CD4-positive, alpha-beta T cell (primary cell): ENCODE measurements at regions of chr12 and their contacts with region 1.

Region 1: GRCh38 chr12:111599459-111600204 is 517 bp upstream of the ATXN2 start:
- DNase-seq: peak; percentile 70 to 92 (median 80)
- ATAC-seq: peak; percentile 69
- H3K4me3 ChIP-seq: peak overlapping the region; percentile 92
- H3K4me3 Mint-ChIP-seq: peak overlapping the region; percentile 94
- H3K27ac ChIP-seq: peak overlapping the region; percentile 83 to 88
- H3K27ac Mint-ChIP-seq: peak overlapping the region; percentile 88
- H3K4me1 ChIP-seq: peaks cover 19% of the 10 kb centered on the region
- H3K4me1 Mint-ChIP-seq: peaks cover 31% of the 10 kb centered on the region
- H3K27me3 ChIP-seq: no peaks in the 10 kb centered on the region
- H3K27me3 Mint-ChIP-seq: no peaks in the 10 kb centered on the region
- CTCF ChIP-seq: no peak

Region 2: DNA sequence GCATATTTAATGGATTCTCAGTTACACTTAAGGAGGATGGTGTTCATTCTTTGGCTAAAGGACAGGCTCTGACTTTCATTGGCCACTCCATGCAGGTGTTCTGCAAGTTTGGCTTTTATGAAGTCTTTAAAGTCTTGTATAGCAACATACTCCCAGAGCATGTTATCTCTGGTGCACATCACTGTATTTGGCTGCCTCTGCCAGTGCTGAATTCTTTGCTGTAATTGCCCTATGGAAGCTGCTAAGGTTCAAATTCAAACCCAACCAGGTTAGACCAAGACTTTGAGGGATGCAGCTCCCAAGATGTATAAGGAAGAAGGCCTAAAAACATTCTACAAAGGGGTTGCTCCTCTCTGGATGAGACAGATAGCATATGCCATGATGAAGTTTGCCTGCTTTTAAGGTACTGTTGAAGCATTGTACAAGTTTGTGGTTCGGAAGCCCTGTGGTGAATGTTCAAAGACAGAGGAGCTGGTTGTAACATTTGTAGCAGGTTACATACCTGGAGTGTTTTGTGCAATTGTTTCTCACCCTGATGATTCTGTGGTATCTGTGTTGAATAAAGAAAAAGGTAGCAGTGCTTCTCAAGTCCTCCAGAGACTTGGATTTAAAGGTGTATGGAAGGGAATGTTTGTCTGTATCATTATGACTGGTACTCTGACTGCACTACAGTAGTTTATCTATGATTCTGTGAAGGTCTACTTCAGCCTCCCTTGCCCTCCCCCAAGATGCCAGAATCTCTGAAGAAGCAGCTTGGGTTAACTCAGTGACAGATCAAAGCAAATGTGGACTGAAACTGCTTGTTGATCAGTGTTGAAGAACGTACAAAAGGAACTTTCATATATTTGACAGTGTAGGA is 393.9 kb after region 1 on chr12:
- CTCF ChIA-PET with region 1: no interaction called
- POLR2A ChIA-PET with region 1: no interaction called
- intact Hi-C with region 1: loop called in 1 of 2 experiments (anchors 5 kb)
- DNase-seq: peak in 7 of 14 experiments; percentile 18 to 72 (median 52)
- ATAC-seq: peak; percentile 78
- H3K4me3 ChIP-seq: peak overlapping the region; percentile 57
- H3K4me3 Mint-ChIP-seq: peak overlapping the region; percentile 81
- H3K27ac ChIP-seq: peak overlapping the region; percentile 31 to 44
- H3K27ac Mint-ChIP-seq: peak overlapping the region; percentile 86
- H3K4me1 ChIP-seq: peaks cover 56% of the 10 kb centered on the region
- H3K4me1 Mint-ChIP-seq: peaks cover 80% of the 10 kb centered on the region
- H3K27me3 ChIP-seq: no peaks in the 10 kb centered on the region
- H3K27me3 Mint-ChIP-seq: no peaks in the 10 kb centered on the region
- CTCF ChIP-seq: no peak

Region 3: DNA sequence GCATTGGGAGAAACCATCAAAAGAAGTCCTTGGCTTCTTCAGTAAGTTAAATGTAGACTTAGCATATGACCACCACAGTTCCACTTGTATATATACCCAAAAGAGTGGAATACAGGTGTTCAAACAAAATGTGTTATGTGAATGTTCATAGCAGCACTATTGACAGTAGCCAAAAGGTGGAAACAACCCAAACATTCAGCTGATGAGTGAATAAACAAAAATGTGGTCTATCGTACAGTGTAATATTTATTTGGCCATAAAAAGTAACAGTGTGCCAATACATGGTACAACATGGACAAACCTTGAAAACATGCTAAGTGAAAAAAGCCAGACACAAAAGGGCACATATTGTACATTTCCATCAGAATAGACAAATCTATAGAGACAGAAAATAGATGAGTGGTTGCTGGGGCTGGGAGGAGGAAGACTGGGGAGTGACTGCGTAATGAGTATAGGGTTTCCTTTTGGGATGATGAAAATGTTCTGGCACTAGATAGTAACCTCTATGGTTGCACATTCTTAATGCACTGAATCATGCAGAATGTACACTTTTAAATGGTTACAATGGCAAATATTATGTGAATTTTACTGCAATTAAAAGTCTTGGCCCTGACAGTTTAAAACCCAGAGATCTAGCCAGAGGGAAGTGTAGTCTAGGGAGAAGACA is 419.1 kb after region 1 on chr12:
- CTCF ChIA-PET with region 1: no interaction called
- POLR2A ChIA-PET with region 1: no interaction called
- intact Hi-C with region 1: no loop called
- DNase-seq: no peak
- ATAC-seq: no peak
- H3K4me3 ChIP-seq: no peak overlapping the region
- H3K4me3 Mint-ChIP-seq: no peak overlapping the region
- H3K27ac ChIP-seq: peak overlapping the region in 1 of 2 donors; percentile 14
- H3K27ac Mint-ChIP-seq: peak overlapping the region; percentile 63
- H3K4me1 ChIP-seq: peaks cover 48% of the 10 kb centered on the region
- H3K4me1 Mint-ChIP-seq: peaks cover 59% of the 10 kb centered on the region
- H3K27me3 ChIP-seq: no peaks in the 10 kb centered on the region
- H3K27me3 Mint-ChIP-seq: no peaks in the 10 kb centered on the region
- CTCF ChIP-seq: no peak

Region 4: DNA sequence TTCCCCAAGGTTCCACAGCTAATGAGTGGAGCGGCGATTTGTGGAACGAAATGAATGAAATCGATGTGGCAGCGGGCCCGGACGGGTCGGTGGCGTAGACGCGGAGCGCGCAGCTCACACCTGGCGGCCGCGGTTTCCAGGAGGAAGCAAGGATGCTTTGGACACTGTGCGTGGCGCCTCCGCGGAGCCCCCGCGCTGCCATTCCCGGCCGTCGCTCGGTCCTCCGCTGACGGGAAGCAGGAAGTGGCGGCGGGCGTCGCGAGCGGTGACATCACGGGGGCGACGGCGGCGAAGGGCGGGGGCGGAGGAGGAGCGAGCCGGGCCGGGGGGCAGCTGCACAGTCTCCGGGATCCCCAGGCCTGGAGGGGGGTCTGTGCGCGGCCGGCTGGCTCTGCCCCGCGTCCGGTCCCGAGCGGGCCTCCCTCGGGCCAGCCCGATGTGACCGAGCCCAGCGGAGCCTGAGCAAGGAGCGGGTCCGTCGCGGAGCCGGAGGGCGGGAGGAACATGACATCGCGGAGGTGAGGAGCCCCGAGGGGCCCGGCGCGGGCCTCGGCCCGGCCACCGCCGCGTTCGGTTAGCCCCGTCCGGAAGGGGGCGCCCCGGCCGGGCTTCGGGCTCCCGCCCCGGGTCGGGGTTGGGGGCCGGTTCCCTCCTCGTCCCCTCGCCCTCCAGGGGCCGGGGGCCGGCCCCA is 819.1 kb after region 1 on chr12 and contains the start of gene PTPN11:
- CTCF ChIA-PET with region 1: no interaction called
- POLR2A ChIA-PET with region 1: no interaction called
- intact Hi-C with region 1: loop called in 1 of 2 experiments (anchors 2 kb)
- DNase-seq: peak; percentile 77 to 95 (median 87)
- ATAC-seq: peak; percentile 84
- H3K4me3 ChIP-seq: peak within 1 kb of the TSS; percentile 79
- H3K4me3 Mint-ChIP-seq: peak within 1 kb of the TSS; percentile 97
- H3K27ac ChIP-seq: peak within 1 kb of the TSS; percentile 83 to 88
- H3K27ac Mint-ChIP-seq: peak within 1 kb of the TSS; percentile 99
- H3K4me1 ChIP-seq: peaks cover 36% of the 10 kb centered on the region
- H3K4me1 Mint-ChIP-seq: peaks cover 40% of the 10 kb centered on the region
- H3K27me3 ChIP-seq: no peaks in the 10 kb centered on the region
- H3K27me3 Mint-ChIP-seq: no peaks in the 10 kb centered on the region
- CTCF ChIP-seq: peak; percentile 10
- total RNA-seq, gene PTPN11: 44.6 to 46.4 TPM